Left cardiac atrium (tissue), 4 donors: ENCODE measurements at regions of chr16 and their contacts with region 1.

Region 1: GRCh38 chr16:65671-66137 is 6.7 kb downstream of the RHBDF1 start:
- DNase-seq: peak; percentile 90
- ATAC-seq: peak; percentile 53 to 80

Region 2: GRCh38 chr16:96935-97381 is 31.3 kb after region 1 on chr16:
- intact Hi-C with region 1: loop called (anchors 1 to 2 kb)
- DNase-seq: peak; percentile 89
- ATAC-seq: peak; percentile 85 to 87